ENCODE measurements at regions of chr11 and their contacts with region 1.

Region 1: GRCh38 chr11:19332470-19332869 is 91.7 kb upstream of the E2F8 start:
- DNase-seq: no peak
- ATAC-seq: no peak
- H3K4me3 ChIP-seq: no peak overlapping the region
- H3K27ac ChIP-seq: no peak overlapping the region
- H3K4me1 ChIP-seq: no peaks in the 10 kb centered on the region
- H3K27me3 ChIP-seq: peaks cover 16% of the 10 kb centered on the region; the same call in 1 of the 2 replicates
- CTCF ChIP-seq: no peak

Region 2: GRCh38 chr11:19557720-19558140 is 225.3 kb after region 1 on chr11:
- CTCF ChIA-PET with region 1: no interaction called
- POLR2A ChIA-PET with region 1: no interaction called
- in situ Hi-C with region 1: no loop called
- intact Hi-C with region 1: no loop called
- DNase-seq: peak; percentile 53
- ATAC-seq: peak; percentile 84
- H3K4me3 ChIP-seq: no peak overlapping the region
- H3K27ac ChIP-seq: no peak overlapping the region
- H3K4me1 ChIP-seq: no peaks in the 10 kb centered on the region
- H3K27me3 ChIP-seq: peaks cover 9% of the 10 kb centered on the region; the same call in 1 of the 2 replicates
- CTCF ChIP-seq: peak; percentile 90

Region 3: GRCh38 chr11:20688761-20689160 is 1356.3 kb after region 1 on chr11:
- CTCF ChIA-PET with region 1: no interaction called
- POLR2A ChIA-PET with region 1: no interaction called
- in situ Hi-C with region 1: no loop called
- intact Hi-C with region 1: loop called (anchors 10 kb)
- DNase-seq: no peak
- ATAC-seq: no peak
- H3K4me3 ChIP-seq: no peak overlapping the region
- H3K27ac ChIP-seq: no peak overlapping the region
- H3K4me1 ChIP-seq: no peaks in the 10 kb centered on the region
- H3K27me3 ChIP-seq: no peaks in the 10 kb centered on the region
- CTCF ChIP-seq: no peak